ENCODE measurements at regions of chr17 and their contacts with region 1.

Region 1: DNA sequence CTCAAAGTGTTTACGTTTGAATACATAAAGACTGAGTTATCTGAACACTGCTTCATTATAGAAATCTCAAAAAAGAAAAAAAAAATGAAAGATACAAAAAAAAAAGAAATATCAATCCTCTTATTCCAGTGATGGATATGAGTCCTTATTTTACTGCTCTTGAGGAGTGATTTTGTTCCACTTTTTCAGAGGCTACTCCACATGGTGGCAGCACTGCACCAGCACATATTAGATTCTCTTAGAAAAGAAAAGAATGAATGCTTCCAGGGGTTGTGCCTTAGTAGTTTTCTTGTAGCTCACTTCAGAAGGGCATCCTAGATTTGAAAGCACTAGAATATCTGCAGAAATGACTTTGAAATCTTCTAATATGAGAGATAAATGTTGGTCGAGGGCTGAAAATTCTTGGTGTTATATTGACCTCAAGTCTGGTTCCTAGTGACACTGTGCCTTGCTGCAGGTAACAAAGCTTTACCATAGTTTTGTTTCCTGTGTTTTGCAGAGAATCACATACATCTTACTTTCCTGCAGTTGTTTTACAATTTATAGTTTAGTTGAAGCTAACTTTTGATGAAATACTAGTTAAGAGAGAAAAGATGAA is 25.9 kb downstream of the AP2B1 start:
- DNase-seq: peak in 1 of 2 experiments; percentile 67
- H3K4me3 ChIP-seq: no peak overlapping the region
- H3K4me3 Mint-ChIP-seq: no peak overlapping the region
- H3K27ac Mint-ChIP-seq: no peak overlapping the region
- H3K4me1 ChIP-seq: no peaks in the 10 kb centered on the region; the same call in 1 of the 2 replicates
- H3K4me1 Mint-ChIP-seq: no peaks in the 10 kb centered on the region
- H3K27me3 ChIP-seq: no peaks in the 10 kb centered on the region
- H3K27me3 Mint-ChIP-seq: no peaks in the 10 kb centered on the region
- CTCF ChIP-seq: peak; percentile 78 to 79

Region 2: GRCh38 chr17:35627417-35627816 is 14.4 kb after region 1 on chr17:
- CTCF ChIA-PET with region 1: interaction called, 10 read pairs
- POLR2A ChIA-PET with region 1: no interaction called
- intact Hi-C with region 1: loop called (anchors 2 kb)
- DNase-seq: peak; percentile 40 to 50
- H3K4me3 ChIP-seq: no peak overlapping the region
- H3K4me3 Mint-ChIP-seq: peak overlapping the region; percentile 30
- H3K27ac Mint-ChIP-seq: peak overlapping the region; percentile 66
- H3K4me1 ChIP-seq: peaks cover 22% of the 10 kb centered on the region
- H3K4me1 Mint-ChIP-seq: peaks cover 19% of the 10 kb centered on the region
- H3K27me3 ChIP-seq: no peaks in the 10 kb centered on the region
- H3K27me3 Mint-ChIP-seq: no peaks in the 10 kb centered on the region
- CTCF ChIP-seq: no peak

Region 3: DNA sequence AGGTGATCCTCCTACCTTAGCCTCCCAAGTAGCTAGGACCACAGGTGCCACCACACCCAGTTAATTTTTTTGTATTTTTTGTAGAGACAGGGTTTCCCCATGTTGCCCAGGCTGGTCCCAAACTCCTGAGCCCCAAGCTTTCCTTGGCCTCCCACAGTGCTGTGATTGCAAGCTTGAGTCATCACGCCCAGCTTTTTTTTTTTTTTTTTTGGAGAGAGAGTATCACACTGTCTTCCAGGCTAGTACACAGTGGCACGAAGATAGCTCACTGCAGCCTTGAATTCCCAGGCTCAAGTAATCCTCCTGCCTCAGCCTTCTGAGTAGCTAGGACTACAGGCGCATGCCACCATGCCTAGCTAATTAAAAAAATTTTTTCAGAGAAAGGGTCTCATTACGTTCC is 228.5 kb after region 1 on chr17:
- CTCF ChIA-PET with region 1: no interaction called
- POLR2A ChIA-PET with region 1: no interaction called
- intact Hi-C with region 1: no loop called
- DNase-seq: no peak
- H3K4me3 ChIP-seq: no peak overlapping the region
- H3K4me3 Mint-ChIP-seq: no peak overlapping the region
- H3K27ac Mint-ChIP-seq: no peak overlapping the region
- H3K4me1 ChIP-seq: no peaks in the 10 kb centered on the region
- H3K4me1 Mint-ChIP-seq: no peaks in the 10 kb centered on the region
- H3K27me3 ChIP-seq: no peaks in the 10 kb centered on the region
- H3K27me3 Mint-ChIP-seq: no peaks in the 10 kb centered on the region
- CTCF ChIP-seq: no peak

Measured in Caco-2 (cell line).